AG04450 (cell line): ENCODE measurements at regions of chr16 and their contacts with region 1.

Region 1: DNA sequence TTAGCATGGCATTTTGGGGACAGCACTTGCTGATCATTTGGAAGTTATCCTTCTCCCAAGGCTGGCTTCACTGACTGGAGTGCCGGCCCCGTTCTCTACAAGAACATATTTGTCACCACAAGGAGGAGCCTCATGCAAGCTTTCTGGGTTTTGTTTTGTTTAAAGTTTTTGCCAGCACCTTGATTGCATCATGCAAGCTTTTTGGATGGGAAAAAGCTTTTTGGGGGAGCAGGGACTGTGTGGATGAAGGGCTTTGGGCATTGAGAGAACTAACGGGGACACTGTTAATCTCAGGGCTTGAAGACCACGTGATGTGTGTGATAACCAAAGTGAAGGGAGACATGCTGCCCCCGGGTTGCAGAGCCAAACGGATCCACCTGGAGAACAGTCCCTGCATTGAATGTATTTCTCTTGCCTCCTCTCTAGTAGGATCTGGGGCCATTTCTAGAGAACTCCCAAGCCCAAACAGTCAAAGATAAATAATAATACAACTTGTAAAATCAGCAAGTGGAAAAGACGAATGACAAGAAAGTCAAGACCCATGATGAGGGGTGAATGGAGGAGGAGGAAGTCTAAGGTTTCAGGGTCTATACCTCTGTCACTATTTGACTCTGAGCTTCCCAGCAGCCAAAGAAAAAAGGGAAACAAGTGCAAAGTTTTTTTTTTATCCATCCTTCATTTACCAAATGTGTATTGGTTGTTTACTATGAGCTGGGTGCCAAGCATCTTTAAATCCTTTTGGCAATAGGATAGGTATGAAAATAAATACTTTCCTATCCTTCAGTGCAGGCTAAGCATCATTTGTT is 17.2 kb downstream of the TMEM114 start:
- DNase-seq: no peak
- H3K4me3 ChIP-seq: 0 out of 2 replicates have a peak overlapping the region, but pooled peaks have one; percentile 7
- H3K27ac ChIP-seq: no peak overlapping the region
- H3K27me3 ChIP-seq: peaks cover 9% of the 10 kb centered on the region
- CTCF ChIP-seq: peak; percentile 56

Region 2: DNA sequence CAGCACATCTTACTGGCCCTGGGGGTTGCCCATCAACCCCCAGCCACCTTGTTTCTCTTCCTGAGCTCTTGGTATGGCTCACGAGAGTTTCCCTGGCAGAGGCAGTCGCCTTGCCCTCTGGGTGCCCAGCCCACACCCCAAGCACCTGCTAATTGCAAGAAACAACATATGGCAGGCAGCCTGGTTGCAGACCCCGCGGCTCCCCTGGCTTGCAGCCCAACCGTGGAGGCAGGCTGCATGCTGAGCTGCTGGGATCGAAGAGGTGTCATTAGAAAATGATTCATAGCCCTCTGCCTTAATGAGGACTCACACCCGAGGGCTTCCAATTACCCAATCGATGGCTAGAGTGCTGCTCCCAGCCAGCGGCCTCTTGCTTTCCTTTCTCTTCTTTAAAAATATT is 98.5 kb before region 1 on chr16:
- CTCF ChIA-PET with region 1: no interaction called
- POLR2A ChIA-PET with region 1: no interaction called
- DNase-seq: no peak
- H3K4me3 ChIP-seq: no peak overlapping the region
- H3K27ac ChIP-seq: no peak overlapping the region
- H3K27me3 ChIP-seq: no peaks in the 10 kb centered on the region
- CTCF ChIP-seq: no peak

Region 3: GRCh38 chr16:8583199-8583598 is 10.1 kb after region 1 on chr16:
- CTCF ChIA-PET with region 1: interaction called, 10 read pairs
- POLR2A ChIA-PET with region 1: no interaction called
- DNase-seq: no peak
- H3K4me3 ChIP-seq: no peak overlapping the region
- H3K27ac ChIP-seq: no peak overlapping the region
- H3K27me3 ChIP-seq: peaks cover 5% of the 10 kb centered on the region
- CTCF ChIP-seq: no peak